Activated CD4-positive, alpha-beta memory T cell treated with anti-CD3 and anti-CD28 coated beads for 36 hours (primary cell): ENCODE measurements at regions of chr18 and their contacts with region 1.

Region 1: GRCh38 chr18:35972197-35973052 is at the start of gene RMP24:
- DNase-seq: peak; percentile 97
- H3K4me3 Mint-ChIP-seq: peak within 1 kb of the TSS; percentile 95
- H3K27ac Mint-ChIP-seq: peak within 1 kb of the TSS; percentile 98
- H3K4me1 Mint-ChIP-seq: peaks cover 50% of the 10 kb centered on the region
- H3K27me3 Mint-ChIP-seq: no peaks in the 10 kb centered on the region

Region 2: GRCh38 chr18:34729264-34729663 is 1243.2 kb before region 1 on chr18:
- CTCF ChIA-PET with region 1: no interaction called
- POLR2A ChIA-PET with region 1: no interaction called
- intact Hi-C with region 1: no loop called
- DNase-seq: no peak
- H3K4me3 Mint-ChIP-seq: no peak overlapping the region
- H3K27ac Mint-ChIP-seq: no peak overlapping the region
- H3K4me1 Mint-ChIP-seq: no peaks in the 10 kb centered on the region
- H3K27me3 Mint-ChIP-seq: no peaks in the 10 kb centered on the region

Region 3: DNA sequence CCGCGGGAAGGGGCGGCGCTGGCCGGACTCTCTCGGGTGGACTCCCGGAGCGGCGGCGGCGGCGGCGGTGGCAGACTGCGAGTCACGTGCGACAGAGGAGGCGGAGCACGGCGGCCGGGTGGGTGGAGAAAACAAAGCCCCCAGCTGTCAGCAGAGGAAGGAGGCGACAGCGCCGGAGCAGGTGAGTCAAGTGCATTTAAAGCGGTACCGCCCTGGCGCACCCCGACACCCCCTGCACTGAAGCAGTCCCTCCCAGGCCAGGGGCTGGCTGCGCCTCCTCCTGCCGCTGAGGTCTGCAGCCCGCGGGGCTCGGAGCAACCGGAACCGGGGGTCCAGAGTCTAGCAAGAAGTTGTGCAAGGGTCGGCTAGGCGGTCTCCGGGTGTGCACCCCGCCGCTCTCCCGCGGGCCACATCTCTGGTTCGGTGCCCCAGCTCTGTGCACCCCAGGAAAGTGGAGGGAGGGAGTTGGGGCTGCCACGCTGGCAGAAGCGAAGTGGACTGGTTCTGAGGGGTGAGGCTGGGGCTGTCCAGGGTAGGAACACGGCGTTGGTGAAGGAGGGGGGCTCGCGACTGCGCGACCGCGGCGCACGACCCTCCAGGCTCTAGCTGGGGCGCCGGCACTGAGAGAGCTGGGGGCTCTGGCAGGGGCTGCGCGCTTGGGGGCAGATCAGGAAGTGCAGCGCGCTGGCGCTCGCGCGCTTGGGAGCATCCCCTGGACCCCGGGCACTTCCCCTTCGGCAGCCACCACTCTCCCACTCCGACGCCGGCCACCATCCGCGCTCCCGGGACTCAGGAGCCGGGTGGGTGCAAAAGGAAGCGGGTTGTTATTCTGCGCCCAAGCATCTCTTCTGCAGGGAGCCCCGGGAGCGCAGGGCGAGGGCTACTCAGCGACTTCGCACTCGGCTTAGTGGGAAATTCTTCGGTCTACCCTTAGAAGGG is 995.3 kb before region 1 on chr18:
- CTCF ChIA-PET with region 1: no interaction called
- POLR2A ChIA-PET with region 1: no interaction called
- intact Hi-C with region 1: loop called (anchors 2 kb)
- DNase-seq: peak; percentile 78
- H3K4me3 Mint-ChIP-seq: peak overlapping the region; percentile 72
- H3K27ac Mint-ChIP-seq: no peak overlapping the region
- H3K4me1 Mint-ChIP-seq: peaks cover 23% of the 10 kb centered on the region
- H3K27me3 Mint-ChIP-seq: peaks cover 30% of the 10 kb centered on the region

Region 4: DNA sequence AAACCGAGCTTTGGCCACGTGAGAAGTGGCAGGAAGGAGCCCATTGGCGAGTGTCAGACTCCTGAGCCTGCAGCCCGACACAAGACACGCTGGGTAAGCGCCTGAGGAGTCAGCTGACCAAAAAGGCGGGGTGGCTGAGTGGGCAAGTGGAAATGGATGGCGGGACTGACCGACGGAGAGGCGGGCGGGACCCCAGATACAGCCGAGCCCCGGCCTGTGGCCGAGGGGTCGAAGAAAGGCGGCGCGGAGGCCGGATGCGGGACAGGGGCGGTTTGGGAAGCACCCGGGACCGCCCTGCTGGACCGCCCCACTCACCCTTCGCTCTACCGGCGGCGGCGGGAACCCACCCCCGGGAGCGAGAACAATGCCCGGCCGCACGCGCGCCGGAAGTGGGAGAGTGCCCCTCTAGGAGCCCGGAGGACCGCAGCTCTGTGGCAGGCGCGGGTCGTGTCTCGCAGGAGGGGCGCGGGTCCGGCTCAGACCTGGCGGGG is 705.2 kb before region 1 on chr18:
- CTCF ChIA-PET with region 1: no interaction called
- POLR2A ChIA-PET with region 1: no interaction called
- intact Hi-C with region 1: loop called (anchors 1 kb)
- DNase-seq: peak; percentile 75
- H3K4me3 Mint-ChIP-seq: peak overlapping the region; percentile 71
- H3K27ac Mint-ChIP-seq: peak overlapping the region; percentile 69
- H3K4me1 Mint-ChIP-seq: peaks cover 25% of the 10 kb centered on the region
- H3K27me3 Mint-ChIP-seq: no peaks in the 10 kb centered on the region

Region 5: DNA sequence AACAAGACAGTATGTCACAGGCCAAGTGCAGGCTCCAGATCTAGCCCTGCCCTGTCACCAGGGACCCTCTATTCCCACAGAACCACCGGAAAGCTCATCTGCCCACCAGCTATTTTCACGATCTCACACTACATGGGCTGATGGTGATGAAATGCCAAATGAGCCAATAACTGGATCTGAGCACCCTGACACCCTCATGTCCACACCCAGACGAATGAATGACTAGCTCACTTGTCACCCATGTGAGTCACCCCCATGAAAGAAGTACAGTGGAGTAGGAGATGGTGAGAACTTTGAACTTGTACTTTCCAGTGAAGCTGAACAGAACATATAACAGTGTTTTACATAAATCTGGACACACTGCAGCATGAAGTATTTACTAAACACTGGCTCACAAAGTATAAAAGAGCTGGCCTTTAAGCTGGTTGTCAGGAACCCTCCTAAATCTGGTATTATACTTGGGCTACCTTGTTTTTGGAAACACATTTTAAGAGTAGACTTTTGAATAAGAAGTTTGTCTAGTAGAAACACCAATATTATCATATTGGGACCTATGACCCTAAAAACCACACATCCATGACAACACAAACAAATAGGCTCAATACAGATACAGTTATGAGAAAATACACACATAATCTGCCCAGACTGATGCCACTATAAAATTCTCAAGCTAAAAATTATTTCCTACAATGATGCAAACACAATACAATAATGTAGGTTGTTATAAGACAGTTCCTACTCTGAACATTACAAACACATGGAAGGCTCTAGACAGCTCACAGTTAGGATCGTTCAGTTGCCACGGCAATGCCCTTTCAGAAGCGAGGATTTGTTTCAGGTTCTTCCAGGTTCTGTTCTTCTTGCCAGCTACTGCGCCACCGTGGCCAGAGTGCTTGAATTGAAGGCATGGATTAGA is 493.6 kb before region 1 on chr18:
- CTCF ChIA-PET with region 1: no interaction called
- POLR2A ChIA-PET with region 1: no interaction called
- intact Hi-C with region 1: loop called (anchors 5 kb)
- DNase-seq: peak; percentile 65
- H3K4me3 Mint-ChIP-seq: peak overlapping the region; percentile 8
- H3K27ac Mint-ChIP-seq: peak overlapping the region; percentile 39
- H3K4me1 Mint-ChIP-seq: peaks cover 34% of the 10 kb centered on the region
- H3K27me3 Mint-ChIP-seq: no peaks in the 10 kb centered on the region

Region 6: DNA sequence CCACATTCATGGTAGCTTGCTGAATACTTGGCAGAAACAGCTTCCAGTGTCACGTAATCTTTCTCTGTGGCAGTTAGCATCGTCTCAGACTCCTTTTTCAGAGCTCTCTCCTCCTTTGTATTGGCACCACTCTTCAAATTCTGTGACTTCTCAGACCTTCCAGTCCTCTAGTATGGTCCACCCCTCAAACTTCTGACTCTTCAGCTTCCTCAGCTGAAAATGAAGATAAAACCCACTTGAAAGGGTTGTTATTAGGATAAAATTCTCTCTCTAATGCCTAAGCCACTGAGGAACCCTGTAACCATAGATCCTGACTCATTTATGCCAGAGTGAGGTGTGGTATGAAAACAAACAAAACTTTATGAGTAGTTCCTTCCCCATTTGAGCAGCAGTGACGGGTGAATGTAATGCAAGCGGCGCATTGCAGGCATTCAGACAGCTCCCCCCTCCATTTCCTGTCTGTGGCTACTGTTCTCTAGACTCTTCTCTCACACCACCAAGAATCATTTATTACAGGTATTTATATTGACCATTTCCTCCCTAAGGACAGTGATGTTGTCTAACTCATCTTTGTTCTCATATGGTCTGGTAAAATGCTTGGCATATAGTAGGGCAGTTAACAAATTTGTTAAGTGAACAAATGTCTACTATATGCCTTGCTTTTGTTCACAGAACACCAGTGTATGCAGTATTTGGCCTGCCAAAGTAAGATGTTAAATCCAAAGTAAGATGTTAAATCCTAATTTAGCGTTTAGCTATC is 355.6 kb before region 1 on chr18:
- CTCF ChIA-PET with region 1: no interaction called
- POLR2A ChIA-PET with region 1: no interaction called
- intact Hi-C with region 1: loop called (anchors 2 kb)
- DNase-seq: peak; percentile 81
- H3K4me3 Mint-ChIP-seq: no peak overlapping the region
- H3K27ac Mint-ChIP-seq: no peak overlapping the region
- H3K4me1 Mint-ChIP-seq: peaks cover 7% of the 10 kb centered on the region
- H3K27me3 Mint-ChIP-seq: no peaks in the 10 kb centered on the region

Region 7: GRCh38 chr18:36129300-36130038 is 157.0 kb after region 1 on chr18 and contains the starts of genes ELP2 and SLC39A6:
- CTCF ChIA-PET with region 1: interaction called, 3 read pairs
- POLR2A ChIA-PET with region 1: interaction called, 8 read pairs
- intact Hi-C with region 1: loop called (anchors 1 kb)
- DNase-seq: peak; percentile 95
- H3K4me3 Mint-ChIP-seq: peak within 1 kb of the TSS; percentile 94
- H3K27ac Mint-ChIP-seq: peak within 1 kb of the TSS; percentile 95
- H3K4me1 Mint-ChIP-seq: peaks cover 60% of the 10 kb centered on the region
- H3K27me3 Mint-ChIP-seq: no peaks in the 10 kb centered on the region
- total RNA-seq, gene ELP2: 83.7 to 84.4 TPM
- total RNA-seq, gene SLC39A6: 23.7 to 24.3 TPM